Head of caudate nucleus (tissue), 42 donors: ENCODE measurements at regions of chr17 and their contacts with region 1.

Region 1: GRCh38 chr17:81702971-81703746 is at the start of gene MRPL12:
- DNase-seq: peak; percentile 90 to 99 (median 97)

Region 2: GRCh38 chr17:81484195-81484979 is 218.8 kb before region 1 on chr17:
- intact Hi-C with region 1: no loop called
- DNase-seq: peak; percentile 69 to 96 (median 91)

Region 3: GRCh38 chr17:81607431-81607830 is 95.7 kb before region 1 on chr17:
- intact Hi-C with region 1: no loop called
- DNase-seq: no peak

Region 4: GRCh38 chr17:81666342-81667191 is 36.6 kb before region 1 on chr17 and contains the starts of genes CCDC137 and OXLD1:
- intact Hi-C with region 1: loop called (anchors 5 kb)
- DNase-seq: peak; percentile 92 to 99 (median 97)